Aorta (tissue), 5 donors: ENCODE measurements at regions of chr5 and their contacts with region 1.

Region 1: GRCh38 chr5:147949711-147950573 is 43.6 kb upstream of the C5orf46 start:
- DNase-seq: no peak
- ATAC-seq: no peak
- H3K4me3 ChIP-seq: no peak overlapping the region
- H3K27ac ChIP-seq: no peak overlapping the region
- H3K4me1 ChIP-seq: no peaks in the 10 kb centered on the region
- H3K27me3 ChIP-seq: no peaks in the 10 kb centered on the region

Region 2: DNA sequence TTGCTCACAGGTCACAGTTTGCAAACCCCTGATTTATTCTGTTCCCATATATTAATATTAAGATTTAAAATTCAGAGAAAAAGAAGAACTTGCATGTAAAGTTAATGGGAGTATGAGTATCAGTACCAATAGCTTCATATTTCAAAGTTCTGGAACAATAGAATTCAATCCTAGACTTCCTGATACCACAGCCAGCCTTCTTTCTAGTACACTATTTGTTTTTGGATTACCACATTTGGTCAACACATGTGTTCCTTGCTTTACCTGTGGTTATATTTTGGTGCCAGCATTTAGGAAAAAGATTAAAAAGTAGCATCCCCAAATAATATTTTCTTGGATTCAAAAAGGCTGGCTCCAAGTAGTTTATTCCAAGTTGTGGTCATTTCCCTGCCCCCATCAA is 163.3 kb after region 1 on chr5:
- intact Hi-C with region 1: loop called (anchors 10 kb)
- DNase-seq: no peak
- ATAC-seq: no peak
- H3K4me3 ChIP-seq: no peak overlapping the region
- H3K27ac ChIP-seq: no peak overlapping the region
- H3K4me1 ChIP-seq: no peaks in the 10 kb centered on the region
- H3K27me3 ChIP-seq: no peaks in the 10 kb centered on the region